Mammary epithelial cell (primary cell): ENCODE measurements at regions of chr19 and their contacts with region 1.

Region 1: GRCh38 chr19:7799640-7800355 is 30.2 kb upstream of the EVI5L start:
- DNase-seq: peak; percentile 56
- H3K4me3 ChIP-seq: peak overlapping the region; percentile 8 to 42 (median 22)
- H3K27ac ChIP-seq: no peak overlapping the region
- H3K4me1 ChIP-seq: peaks cover 5% of the 10 kb centered on the region
- H3K27me3 ChIP-seq: no peaks in the 10 kb centered on the region
- CTCF ChIP-seq: peak; percentile 32 to 55

Region 2: DNA sequence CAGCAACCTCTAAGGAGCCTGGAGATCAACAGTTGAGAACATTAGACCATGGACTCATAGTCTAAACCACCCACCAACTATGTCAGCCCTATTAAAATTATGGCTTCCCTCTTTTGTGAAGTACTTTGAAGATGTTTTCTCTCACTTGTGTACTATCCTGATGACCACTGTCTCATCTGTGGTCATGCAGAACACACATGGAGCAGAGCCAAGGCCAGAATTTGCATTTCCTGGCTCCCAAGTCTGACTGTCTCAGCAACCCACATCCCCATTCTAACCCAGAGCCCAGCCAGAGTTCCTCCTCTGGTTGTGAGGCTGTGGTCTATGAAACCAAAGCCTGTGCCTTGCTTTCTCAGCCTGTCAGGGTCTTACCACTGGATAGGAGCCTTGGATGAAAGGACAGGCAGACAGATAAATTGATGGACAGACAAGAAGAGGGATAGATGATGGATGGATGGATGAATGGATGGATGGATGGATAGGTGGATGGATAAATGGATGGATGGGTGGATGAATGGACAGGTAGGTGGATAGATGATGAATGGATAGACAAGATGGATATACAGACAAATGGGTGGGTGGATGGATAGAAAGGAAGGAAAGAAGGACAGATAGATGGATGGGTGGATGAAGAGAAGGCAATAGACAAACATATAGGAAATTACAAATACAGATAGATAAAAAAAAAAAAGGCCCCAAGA is 694.9 kb before region 1 on chr19:
- CTCF ChIA-PET with region 1: no interaction called
- dilution Hi-C with region 1: no loop called
- in situ Hi-C with region 1: no loop called
- intact Hi-C with region 1: loop called (anchors 5 kb)
- DNase-seq: no peak
- H3K4me3 ChIP-seq: no peak overlapping the region
- H3K27ac ChIP-seq: no peak overlapping the region
- H3K4me1 ChIP-seq: peaks cover under 1% of the 10 kb centered on the region
- H3K27me3 ChIP-seq: no peaks in the 10 kb centered on the region
- CTCF ChIP-seq: no peak

Region 3: DNA sequence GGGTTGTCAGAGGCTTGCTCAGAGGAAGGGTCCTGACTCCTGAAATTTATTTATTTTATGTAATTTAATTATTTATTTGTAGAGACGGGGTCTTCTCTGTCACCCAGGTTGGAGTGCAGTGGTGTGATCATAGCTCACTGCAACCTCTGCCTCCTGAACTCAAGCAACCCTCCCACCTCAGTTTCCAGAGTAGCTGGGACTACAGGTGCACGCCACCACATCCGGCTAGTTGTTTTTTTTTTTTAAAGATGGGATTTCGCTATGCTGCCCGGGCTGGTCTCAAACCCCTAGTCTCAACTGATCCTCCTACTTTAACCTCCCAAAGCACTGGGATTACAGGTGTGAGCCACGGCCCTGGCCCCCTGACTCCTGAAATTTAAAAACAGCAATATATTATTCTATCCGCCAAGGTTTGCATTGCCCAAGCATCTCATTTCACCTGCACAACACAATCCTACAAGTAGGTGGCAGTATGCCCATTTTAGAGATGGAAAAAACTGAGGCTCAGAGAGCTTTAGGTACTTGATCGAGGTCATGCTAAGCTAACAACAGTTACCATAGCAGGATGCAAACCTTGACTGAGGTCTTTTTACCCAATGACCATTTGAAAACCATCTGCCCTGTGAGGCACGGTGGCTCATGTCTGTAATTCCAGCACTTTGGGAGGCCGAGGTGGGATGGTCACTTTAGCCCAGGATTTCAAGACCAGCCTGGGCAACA is 432.9 kb before region 1 on chr19:
- CTCF ChIA-PET with region 1: no interaction called
- dilution Hi-C with region 1: no loop called
- in situ Hi-C with region 1: loop called in 1 of 2 experiments (anchors 25 kb)
- intact Hi-C with region 1: no loop called
- DNase-seq: peak; percentile 49
- H3K4me3 ChIP-seq: no peak overlapping the region
- H3K27ac ChIP-seq: no peak overlapping the region
- H3K4me1 ChIP-seq: no peaks in the 10 kb centered on the region
- H3K27me3 ChIP-seq: no peaks in the 10 kb centered on the region
- CTCF ChIP-seq: peak; percentile 41 to 46

Region 4: DNA sequence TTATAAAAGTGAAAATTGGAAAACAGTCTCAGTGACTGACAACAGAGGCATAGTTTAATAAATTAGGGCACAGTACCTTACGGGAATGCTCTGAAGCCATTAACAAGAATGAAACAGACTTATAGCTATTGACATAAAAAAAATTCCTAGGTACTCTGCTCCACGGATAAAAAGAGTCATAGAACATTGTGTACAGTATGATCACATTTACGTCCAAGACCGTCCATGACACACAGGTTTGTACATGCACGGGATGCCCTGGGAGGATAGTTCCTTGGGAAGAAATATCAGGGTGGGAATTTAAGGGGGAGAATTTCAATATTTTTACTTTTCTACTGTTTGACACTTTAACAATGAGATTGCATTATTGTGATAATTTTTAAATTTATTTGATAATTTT is 229.0 kb before region 1 on chr19:
- CTCF ChIA-PET with region 1: interaction called, 18 read pairs
- dilution Hi-C with region 1: no loop called
- in situ Hi-C with region 1: loop called (anchors 5 to 10 kb)
- intact Hi-C with region 1: loop called (anchors 1 kb)
- DNase-seq: no peak
- H3K4me3 ChIP-seq: no peak overlapping the region
- H3K27ac ChIP-seq: no peak overlapping the region
- H3K4me1 ChIP-seq: no peaks in the 10 kb centered on the region
- H3K27me3 ChIP-seq: no peaks in the 10 kb centered on the region
- CTCF ChIP-seq: no peak

Region 5: GRCh38 chr19:7680606-7681339 is 119.0 kb before region 1 on chr19 and contains the start of gene TRAPPC5:
- CTCF ChIA-PET with region 1: interaction called, 11 read pairs
- dilution Hi-C with region 1: no loop called
- in situ Hi-C with region 1: loop called in 1 of 2 experiments (anchors 10 kb)
- intact Hi-C with region 1: loop called (anchors 1 kb)
- DNase-seq: peak; percentile 60
- H3K4me3 ChIP-seq: peak within 1 kb of the TSS; percentile 93 to 99 (median 99)
- H3K27ac ChIP-seq: peak within 1 kb of the TSS; percentile 45
- H3K4me1 ChIP-seq: peaks cover 11% of the 10 kb centered on the region
- H3K27me3 ChIP-seq: no peaks in the 10 kb centered on the region
- CTCF ChIP-seq: peak; percentile 71 to 79
- total RNA-seq, gene TRAPPC5: 41.8 to 129 TPM

Region 6: GRCh38 chr19:7705387-7706187 is 94.2 kb before region 1 on chr19:
- CTCF ChIA-PET with region 1: no interaction called
- dilution Hi-C with region 1: no loop called
- in situ Hi-C with region 1: no loop called
- intact Hi-C with region 1: no loop called
- DNase-seq: no peak
- H3K4me3 ChIP-seq: no peak overlapping the region
- H3K27ac ChIP-seq: no peak overlapping the region
- H3K4me1 ChIP-seq: no peaks in the 10 kb centered on the region
- H3K27me3 ChIP-seq: no peaks in the 10 kb centered on the region
- CTCF ChIP-seq: no peak

Region 7: GRCh38 chr19:7829561-7830271 is 29.9 kb after region 1 on chr19 and contains the start of gene EVI5L:
- CTCF ChIA-PET with region 1: interaction called, 4 read pairs
- dilution Hi-C with region 1: no loop called
- in situ Hi-C with region 1: no loop called
- intact Hi-C with region 1: loop called (anchors 1 kb)
- DNase-seq: peak; percentile 100
- H3K4me3 ChIP-seq: peak within 1 kb of the TSS; percentile 57 to 75 (median 60)
- H3K27ac ChIP-seq: no peak within 1 kb of the TSS
- H3K4me1 ChIP-seq: peaks cover 27% of the 10 kb centered on the region
- H3K27me3 ChIP-seq: no peaks in the 10 kb centered on the region
- CTCF ChIP-seq: no peak
- total RNA-seq, gene EVI5L: 15.2 to 17.5 TPM

Region 8: DNA sequence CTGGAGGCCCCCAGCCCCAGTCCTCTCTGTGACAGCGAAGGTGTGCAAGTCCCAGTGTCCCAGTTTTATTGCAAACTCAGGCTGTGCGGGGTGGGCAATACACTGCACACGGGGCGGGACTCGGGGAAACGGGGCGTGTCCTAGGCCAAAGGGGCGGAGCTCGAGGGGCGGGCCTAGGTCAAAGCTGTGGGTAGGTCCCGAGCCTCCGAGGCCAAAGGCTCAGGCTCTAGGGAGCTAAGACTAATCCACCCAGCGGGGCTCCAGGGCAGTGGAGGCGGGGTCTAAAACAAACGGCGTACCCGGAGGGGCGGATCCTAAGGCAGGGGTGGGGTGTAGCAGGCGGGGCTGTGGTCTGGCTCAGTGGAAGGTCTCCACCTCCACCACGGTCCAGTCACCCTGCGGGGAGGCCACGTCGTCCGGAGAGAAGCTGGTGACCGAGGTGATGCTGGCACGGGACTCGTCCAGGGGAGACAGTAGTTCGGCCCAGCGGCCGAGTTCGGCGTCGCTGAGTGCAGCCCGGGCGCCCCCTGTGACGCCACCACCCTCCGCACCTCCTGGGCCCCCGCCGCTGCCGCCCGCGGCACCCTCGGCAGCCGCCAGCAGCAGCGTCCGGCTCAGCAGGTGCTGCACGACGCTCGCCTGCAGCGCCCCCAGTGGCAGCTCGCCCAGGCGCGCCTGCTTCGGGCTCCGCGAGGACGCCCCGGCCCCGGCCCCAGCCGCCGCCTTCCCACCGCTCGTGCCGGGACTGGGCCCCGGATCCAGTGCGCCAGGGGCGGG is 69.1 kb after region 1 on chr19:
- CTCF ChIA-PET with region 1: no interaction called
- dilution Hi-C with region 1: no loop called
- in situ Hi-C with region 1: no loop called
- intact Hi-C with region 1: no loop called
- DNase-seq: peak; percentile 74
- H3K4me3 ChIP-seq: peak overlapping the region; percentile 32 to 57 (median 55)
- H3K27ac ChIP-seq: no peak overlapping the region
- H3K4me1 ChIP-seq: peaks cover 32% of the 10 kb centered on the region
- H3K27me3 ChIP-seq: peaks cover 9% of the 10 kb centered on the region
- CTCF ChIP-seq: peak; percentile 40 to 61